ENCODE measurements at regions of chr6 and their contacts with region 1.

Region 1: GRCh38 chr6:26183581-26184366 is 96.5 kb downstream of the HFE start:
- DNase-seq: peak in 1 of 2 experiments; percentile 82
- H3K4me3 ChIP-seq: peak overlapping the region; percentile 45 to 73 (median 70)
- H3K27ac ChIP-seq: peak overlapping the region; percentile 97
- H3K4me1 ChIP-seq: peaks cover 0 to 17% (median 8%) of the 10 kb centered on the region in 4 experiments; a peak in 5 of 7 replicates
- H3K27me3 ChIP-seq: no peaks in the 10 kb centered on the region
- CTCF ChIP-seq: no peak
- EP300 ChIP-seq: no peak
- POLR2A ChIP-seq: peak; percentile 94 to 99
- RAD21 ChIP-seq: no peak

Region 2: GRCh38 chr6:26045065-26045927 is 138.5 kb before region 1 on chr6:
- CTCF ChIA-PET with region 1: no interaction called
- POLR2A ChIA-PET with region 1: interaction called, 16 read pairs
- DNase-seq: no peak
- H3K4me3 ChIP-seq: no peak overlapping the region
- H3K27ac ChIP-seq: 0 out of 2 replicates have a peak overlapping the region, but pooled peaks have one; percentile 22
- H3K4me1 ChIP-seq: peaks cover 0 to 6% (median under 1%) of the 10 kb centered on the region in 4 experiments; a peak in 1 of 7 replicates
- H3K27me3 ChIP-seq: no peaks in the 10 kb centered on the region
- CTCF ChIP-seq: peak in 1 of 3 experiments; percentile 1; a peak in 1 of 4 replicates
- EP300 ChIP-seq: no peak
- POLR2A ChIP-seq: no peak
- RAD21 ChIP-seq: no peak

Region 3: GRCh38 chr6:26054857-26055669 is 128.7 kb before region 1 on chr6:
- CTCF ChIA-PET with region 1: no interaction called
- POLR2A ChIA-PET with region 1: interaction called, 29 read pairs
- DNase-seq: peak; percentile 73 to 75
- H3K4me3 ChIP-seq: peak overlapping the region; percentile 82 to 95 (median 83)
- H3K27ac ChIP-seq: peak overlapping the region; percentile 93
- H3K4me1 ChIP-seq: peaks cover 0 to 3% (median 0%) of the 10 kb centered on the region in 4 experiments; a peak in 1 of 7 replicates
- H3K27me3 ChIP-seq: no peaks in the 10 kb centered on the region
- CTCF ChIP-seq: no peak
- EP300 ChIP-seq: no peak
- POLR2A ChIP-seq: peak; percentile 95 to 97
- RAD21 ChIP-seq: peak; percentile 14 to 29; a peak in 2 of 4 replicates

Region 4: DNA sequence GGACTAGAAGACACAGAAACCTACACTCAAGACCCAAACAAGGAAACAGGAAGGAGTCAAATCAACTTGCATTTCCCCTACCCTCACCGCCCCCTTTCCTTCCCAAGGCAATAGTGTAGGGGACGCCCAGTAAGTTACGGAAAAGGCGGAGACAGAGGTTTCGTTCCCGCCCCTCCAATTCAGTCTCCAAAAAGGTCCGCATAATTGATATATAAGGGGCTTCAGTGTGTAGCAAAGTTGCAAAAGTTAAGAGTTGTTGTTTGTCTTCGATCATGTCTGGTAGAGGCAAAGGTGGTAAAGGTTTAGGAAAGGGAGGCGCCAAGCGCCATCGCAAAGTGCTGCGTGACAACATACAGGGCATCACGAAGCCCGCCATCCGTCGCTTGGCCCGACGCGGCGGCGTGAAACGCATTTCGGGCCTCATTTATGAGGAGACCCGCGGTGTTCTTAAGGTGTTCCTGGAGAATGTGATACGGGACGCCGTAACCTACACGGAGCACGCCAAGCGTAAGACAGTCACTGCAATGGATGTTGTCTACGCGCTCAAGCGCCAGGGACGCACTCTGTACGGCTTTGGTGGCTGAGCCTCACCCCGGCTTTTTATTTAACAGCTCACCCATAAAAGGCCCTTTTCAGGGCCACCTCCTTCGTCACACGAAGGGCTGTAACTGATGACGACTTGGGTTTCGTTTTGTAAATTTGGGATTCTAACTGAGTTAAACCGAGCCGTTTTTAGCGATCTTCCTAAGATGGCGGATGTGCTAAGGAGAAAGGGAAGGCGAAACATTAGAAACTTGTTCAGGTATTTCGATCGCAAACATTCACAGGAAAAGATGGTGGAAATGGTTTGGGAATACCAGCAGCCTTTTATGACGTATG is 56.6 kb after region 1 on chr6:
- CTCF ChIA-PET with region 1: no interaction called
- POLR2A ChIA-PET with region 1: interaction called, 477 read pairs
- DNase-seq: peak in 1 of 2 experiments; percentile 78
- H3K4me3 ChIP-seq: peak overlapping the region; percentile 64 to 96 (median 87)
- H3K27ac ChIP-seq: peak overlapping the region; percentile 96
- H3K4me1 ChIP-seq: peaks cover 1 to 8% (median 4%) of the 10 kb centered on the region in 4 experiments; a peak in 6 of 7 replicates
- H3K27me3 ChIP-seq: no peaks in the 10 kb centered on the region
- CTCF ChIP-seq: no peak
- EP300 ChIP-seq: peak in 1 of 2 experiments; percentile 87; a peak in 1 of 3 replicates
- POLR2A ChIP-seq: peak; percentile 100
- RAD21 ChIP-seq: no peak

Region 5: DNA sequence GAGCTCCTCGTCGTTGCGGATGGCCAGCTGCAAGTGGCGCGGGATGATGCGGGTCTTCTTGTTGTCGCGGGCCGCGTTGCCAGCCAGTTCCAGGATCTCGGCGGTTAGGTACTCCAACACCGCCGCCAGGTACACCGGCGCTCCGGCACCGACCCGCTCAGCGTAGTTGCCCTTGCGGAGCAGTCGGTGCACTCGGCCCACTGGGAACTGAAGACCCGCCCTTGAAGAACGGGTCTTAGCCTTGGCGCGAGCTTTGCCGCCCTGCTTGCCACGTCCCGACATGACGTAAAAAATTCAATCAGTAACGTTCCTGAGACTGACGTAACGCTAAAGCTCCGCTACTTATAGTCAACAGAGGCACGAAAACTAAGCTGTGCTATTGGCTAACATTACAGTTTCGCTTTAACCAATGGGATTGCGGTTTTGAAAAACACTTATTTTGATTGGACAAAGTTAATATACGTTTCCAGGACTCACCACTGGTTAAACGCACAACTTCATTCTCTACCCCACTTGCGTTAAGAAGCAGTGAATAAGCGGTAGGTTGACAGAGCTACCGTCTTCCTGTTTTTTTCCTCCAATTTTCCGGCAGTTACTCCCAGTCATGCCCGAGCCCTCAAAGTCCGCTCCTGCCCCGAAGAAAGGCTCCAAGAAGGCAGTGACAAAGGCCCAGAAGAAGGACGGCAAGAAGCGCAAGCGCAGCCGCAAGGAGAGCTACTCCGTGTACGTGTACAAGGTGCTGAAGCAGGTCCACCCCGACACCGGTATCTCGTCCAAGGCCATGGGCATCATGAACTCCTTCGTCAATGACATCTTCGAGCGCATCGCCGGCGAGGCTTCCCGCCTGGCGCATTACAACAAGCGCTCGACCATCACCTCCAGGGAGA is 1654.5 kb after region 1 on chr6:
- CTCF ChIA-PET with region 1: no interaction called
- POLR2A ChIA-PET with region 1: interaction called, 14 read pairs
- DNase-seq: peak; percentile 76 to 87
- H3K4me3 ChIP-seq: peak overlapping the region; percentile 77 to 96 (median 93)
- H3K27ac ChIP-seq: peak overlapping the region; percentile 98
- H3K4me1 ChIP-seq: peaks cover 0 to 5% (median 2%) of the 10 kb centered on the region in 4 experiments; a peak in 1 of 7 replicates
- H3K27me3 ChIP-seq: no peaks in the 10 kb centered on the region
- CTCF ChIP-seq: no peak
- EP300 ChIP-seq: no peak
- POLR2A ChIP-seq: peak; percentile 88 to 91
- RAD21 ChIP-seq: no peak

Region 6: DNA sequence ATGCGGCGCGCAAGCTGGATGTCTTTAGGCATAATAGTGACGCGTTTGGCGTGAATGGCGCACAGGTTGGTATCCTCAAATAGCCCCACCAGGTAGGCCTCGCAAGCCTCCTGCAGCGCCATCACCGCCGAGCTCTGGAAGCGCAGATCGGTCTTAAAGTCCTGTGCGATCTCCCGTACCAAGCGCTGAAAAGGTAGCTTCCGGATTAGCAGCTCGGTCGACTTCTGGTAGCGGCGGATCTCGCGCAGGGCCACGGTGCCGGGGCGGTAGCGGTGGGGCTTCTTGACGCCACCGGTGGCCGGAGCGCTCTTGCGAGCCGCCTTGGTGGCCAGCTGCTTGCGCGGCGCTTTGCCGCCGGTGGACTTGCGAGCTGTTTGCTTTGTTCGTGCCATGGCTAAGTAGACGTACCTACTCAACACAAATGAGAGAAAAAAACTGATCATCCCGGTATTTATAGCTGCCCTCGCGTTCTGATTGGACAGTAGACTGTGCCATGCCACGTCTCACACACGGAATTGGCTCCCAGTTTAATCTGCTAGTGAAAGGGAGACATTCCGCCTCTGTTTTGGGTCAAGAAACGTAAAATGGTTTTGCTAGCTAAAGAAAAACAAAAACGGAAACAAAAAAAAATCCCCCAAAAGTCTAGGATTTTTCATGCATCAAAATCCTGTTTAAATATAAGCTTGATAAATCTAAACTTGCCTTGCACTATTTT is 1688.3 kb after region 1 on chr6:
- CTCF ChIA-PET with region 1: no interaction called
- POLR2A ChIA-PET with region 1: interaction called, 24 read pairs
- DNase-seq: peak in 1 of 2 experiments; percentile 89
- H3K4me3 ChIP-seq: peak overlapping the region; percentile 61 to 73 (median 67)
- H3K27ac ChIP-seq: peak overlapping the region; percentile 96
- H3K4me1 ChIP-seq: peaks cover 0 to 16% (median 9%) of the 10 kb centered on the region in 4 experiments; a peak in 5 of 7 replicates
- H3K27me3 ChIP-seq: no peaks in the 10 kb centered on the region
- CTCF ChIP-seq: peak in 2 of 3 experiments; percentile 22 to 26; a peak in 3 of 4 replicates
- EP300 ChIP-seq: no peak; a peak in 1 of 3 replicates
- POLR2A ChIP-seq: peak; percentile 97 to 98
- RAD21 ChIP-seq: no peak

Measured in H1 (cell line).